Transverse colon (tissue), 4 donors: ENCODE measurements at regions of chr10 and their contacts with region 1.

Region 1: GRCh38 chr10:44386546-44387052 is 1.7 kb upstream of the CXCL12 start:
- DNase-seq: peak; percentile 57
- H3K4me3 ChIP-seq: no peak overlapping the region
- H3K27ac ChIP-seq: peak overlapping the region in 1 of 4 donors; percentile 75
- H3K4me1 ChIP-seq: peaks cover 0 to 21% (median 13%) of the 10 kb centered on the region in 4 donors
- H3K27me3 ChIP-seq: peaks cover 37% of the 10 kb centered on the region
- CTCF ChIP-seq: peak; percentile 74 to 91 (median 85)
- EP300 ChIP-seq: no peak
- POLR2A ChIP-seq: no peak

Region 2: DNA sequence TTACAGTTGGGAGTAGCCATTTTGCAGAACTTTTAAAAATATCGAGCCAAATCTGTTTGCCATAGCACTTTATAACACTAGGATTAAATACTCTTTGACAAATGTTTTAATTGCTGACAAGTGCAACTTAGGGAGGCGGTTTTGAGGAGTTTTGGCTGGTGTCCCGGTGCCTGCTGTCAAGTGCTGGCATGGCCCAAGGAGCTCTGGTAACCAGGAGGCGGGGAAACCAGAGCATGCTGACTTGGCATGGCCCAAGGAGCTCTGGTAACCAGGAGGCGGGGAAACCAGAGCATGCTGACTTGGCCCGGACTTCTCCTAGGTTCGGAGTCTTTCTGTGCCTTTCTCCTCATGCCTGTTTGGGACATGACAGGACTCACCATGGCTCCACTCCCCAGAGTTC is 707.1 kb before region 1 on chr10:
- in situ Hi-C with region 1: loop called (anchors 5 to 10 kb)
- intact Hi-C with region 1: loop called (anchors 5 kb)
- DNase-seq: peak; percentile 44
- H3K4me3 ChIP-seq: no peak overlapping the region
- H3K27ac ChIP-seq: no peak overlapping the region
- H3K4me1 ChIP-seq: no peaks in the 10 kb centered on the region
- H3K27me3 ChIP-seq: no peaks in the 10 kb centered on the region
- CTCF ChIP-seq: no peak
- EP300 ChIP-seq: no peak
- POLR2A ChIP-seq: no peak

Region 3: GRCh38 chr10:44051584-44052385 is 334.8 kb before region 1 on chr10:
- in situ Hi-C with region 1: no loop called
- intact Hi-C with region 1: loop called (anchors 5 kb)
- DNase-seq: no peak
- H3K4me3 ChIP-seq: no peak overlapping the region
- H3K27ac ChIP-seq: no peak overlapping the region
- H3K4me1 ChIP-seq: peaks cover 0 to 8% (median 4%) of the 10 kb centered on the region in 4 donors
- H3K27me3 ChIP-seq: no peaks in the 10 kb centered on the region
- CTCF ChIP-seq: no peak
- EP300 ChIP-seq: no peak
- POLR2A ChIP-seq: no peak

Region 4: GRCh38 chr10:44857363-44858016 is 470.9 kb after region 1 on chr10:
- in situ Hi-C with region 1: loop called (anchors 10 to 25 kb)
- intact Hi-C with region 1: loop called (anchors 10 kb)
- DNase-seq: peak; percentile 51
- H3K4me3 ChIP-seq: no peak overlapping the region
- H3K27ac ChIP-seq: no peak overlapping the region
- H3K4me1 ChIP-seq: no peaks in the 10 kb centered on the region
- H3K27me3 ChIP-seq: no peaks in the 10 kb centered on the region
- CTCF ChIP-seq: peak; percentile 86 to 99 (median 97)
- EP300 ChIP-seq: no peak
- POLR2A ChIP-seq: no peak